Thyroid gland (tissue), 4 donors: ENCODE measurements at regions of chr12 and their contacts with region 1.

Region 1: DNA sequence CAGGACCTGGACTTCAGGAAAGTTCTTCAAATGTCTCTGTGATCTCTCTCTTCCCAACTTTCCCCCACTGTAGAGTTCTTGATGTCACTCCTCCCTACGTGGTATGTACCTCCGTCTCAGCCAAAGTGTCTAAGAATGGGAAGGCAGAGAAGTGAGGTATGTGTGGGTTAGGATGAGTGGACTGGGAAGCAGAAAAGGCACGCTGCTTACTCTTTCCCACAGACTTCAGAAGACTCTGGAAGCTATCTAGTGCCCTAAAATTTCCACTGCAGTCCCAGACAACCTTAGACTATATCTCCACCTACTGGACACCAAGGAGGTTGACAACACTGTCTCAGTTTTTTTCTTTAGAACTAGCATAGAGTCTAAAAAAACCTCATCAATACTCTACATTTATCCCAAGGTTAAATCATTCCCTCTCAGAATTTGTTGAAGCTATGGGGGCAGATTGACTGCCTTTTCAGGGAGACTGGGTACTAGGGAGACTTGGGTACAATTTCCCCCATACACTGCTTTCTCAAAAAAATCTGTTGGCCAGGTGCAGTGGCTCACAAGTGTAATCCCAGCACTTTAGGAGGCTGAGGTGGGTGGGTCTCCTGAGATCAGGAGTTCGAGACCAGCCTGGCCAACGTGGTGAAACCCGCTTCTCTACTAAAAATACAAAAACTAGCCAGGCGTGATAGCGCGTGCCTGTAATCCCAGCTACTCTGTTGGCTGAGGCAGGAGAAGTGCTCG is 20.6 kb upstream of the ITGA5 start:
- DNase-seq: peak in 1 of 2 donors; percentile 22
- H3K4me3 ChIP-seq: no peak overlapping the region
- H3K27ac ChIP-seq: peak overlapping the region in 2 of 3 donors; percentile 72 to 75
- H3K4me1 ChIP-seq: peaks cover 18 to 24% of the 10 kb centered on the region in 2 donors
- H3K27me3 ChIP-seq: no peaks in the 10 kb centered on the region
- CTCF ChIP-seq: peak; percentile 40 to 96 (median 84)
- POLR2A ChIP-seq: no peak

Region 2: GRCh38 chr12:54207484-54208294 is 232.0 kb before region 1 on chr12:
- intact Hi-C with region 1: no loop called
- DNase-seq: peak; percentile 73 to 78
- H3K4me3 ChIP-seq: no peak overlapping the region
- H3K27ac ChIP-seq: no peak overlapping the region
- H3K4me1 ChIP-seq: no peaks in the 10 kb centered on the region
- H3K27me3 ChIP-seq: no peaks in the 10 kb centered on the region
- CTCF ChIP-seq: peak; percentile 78 to 93 (median 87)
- POLR2A ChIP-seq: no peak

Region 3: GRCh38 chr12:54401119-54401518 is 38.6 kb before region 1 on chr12:
- intact Hi-C with region 1: loop called (anchors 2 kb)
- DNase-seq: no peak
- H3K4me3 ChIP-seq: no peak overlapping the region
- H3K27ac ChIP-seq: no peak overlapping the region
- H3K4me1 ChIP-seq: peaks cover 5% of the 10 kb centered on the region in 2 donors
- H3K27me3 ChIP-seq: no peaks in the 10 kb centered on the region
- CTCF ChIP-seq: no peak
- POLR2A ChIP-seq: no peak

Region 4: DNA sequence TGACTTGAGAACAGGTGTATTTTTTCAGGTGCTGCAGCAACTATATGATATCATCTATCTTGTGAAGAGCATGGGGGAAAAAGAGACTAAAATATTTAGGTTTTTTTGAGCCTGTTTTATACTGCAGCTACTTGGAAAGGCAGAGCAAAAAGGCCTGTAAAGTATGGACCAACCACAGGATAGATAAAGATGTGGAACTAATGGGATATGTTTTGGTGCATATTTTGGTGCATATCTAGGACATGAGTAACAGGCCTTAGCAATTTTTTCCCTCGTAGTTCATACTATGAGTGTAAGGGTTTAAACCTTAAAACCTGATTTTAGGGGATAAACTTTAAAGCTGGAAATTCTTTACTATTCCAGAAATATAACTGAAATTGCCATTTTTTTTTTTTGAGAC is 39.7 kb after region 1 on chr12:
- intact Hi-C with region 1: no loop called
- DNase-seq: no peak
- H3K4me3 ChIP-seq: no peak overlapping the region
- H3K27ac ChIP-seq: no peak overlapping the region
- H3K4me1 ChIP-seq: no peaks in the 10 kb centered on the region
- H3K27me3 ChIP-seq: no peaks in the 10 kb centered on the region
- CTCF ChIP-seq: no peak
- POLR2A ChIP-seq: no peak